Dorsolateral prefrontal cortex (tissue), 120 donors: ENCODE measurements at regions of chr10 and their contacts with region 1.

Region 1: DNA sequence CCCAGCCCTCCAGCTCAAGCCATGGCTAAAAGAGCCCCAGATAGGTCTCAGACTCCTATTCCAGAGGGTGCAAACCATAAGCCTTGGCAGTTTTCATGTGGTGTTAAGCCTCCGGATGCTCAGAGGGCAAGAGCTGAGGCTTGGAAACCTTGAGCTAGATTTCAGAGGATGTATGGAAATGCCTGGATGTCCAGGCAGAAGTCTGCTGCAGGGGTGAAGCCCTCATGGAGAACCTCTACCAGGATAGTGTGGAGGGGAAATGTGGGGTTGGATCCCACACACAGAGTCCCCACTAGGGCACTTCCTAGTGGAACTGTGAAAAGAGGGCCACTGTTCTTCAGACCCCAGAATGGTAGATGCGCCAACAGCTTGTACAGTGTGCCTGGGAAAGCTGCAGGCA is 13.2 kb upstream of the HPSE2 start:
- DNase-seq: no peak
- H3K4me3 ChIP-seq: no peak overlapping the region
- H3K27ac ChIP-seq: no peak overlapping the region
- H3K27me3 ChIP-seq: peaks cover 0 to 23% (median 0%) of the 10 kb centered on the region in 45 donors
- CTCF ChIP-seq: no peak

Region 2: GRCh38 chr10:98790802-98791201 is 458.0 kb before region 1 on chr10:
- intact Hi-C with region 1: loop called in 1 of 2 experiments (anchors 5 kb)
- DNase-seq: no peak
- H3K4me3 ChIP-seq: no peak overlapping the region
- H3K27ac ChIP-seq: no peak overlapping the region
- H3K27me3 ChIP-seq: peaks cover 0 to 12% (median 0%) of the 10 kb centered on the region in 45 donors
- CTCF ChIP-seq: peak in 44 of 56 donors; percentile 9 to 59 (median 36)